ENCODE measurements at regions of chr3 and their contacts with region 1.

Region 1: GRCh38 chr3:98972155-98972554 is 70.7 kb upstream of the DCBLD2 start:
- DNase-seq: no peak
- H3K4me3 ChIP-seq: no peak overlapping the region
- H3K27ac ChIP-seq: peak overlapping the region; percentile 91
- H3K4me1 ChIP-seq: peaks cover 40% of the 10 kb centered on the region
- H3K27me3 ChIP-seq: no peaks in the 10 kb centered on the region
- CTCF ChIP-seq: no peak

Region 2: DNA sequence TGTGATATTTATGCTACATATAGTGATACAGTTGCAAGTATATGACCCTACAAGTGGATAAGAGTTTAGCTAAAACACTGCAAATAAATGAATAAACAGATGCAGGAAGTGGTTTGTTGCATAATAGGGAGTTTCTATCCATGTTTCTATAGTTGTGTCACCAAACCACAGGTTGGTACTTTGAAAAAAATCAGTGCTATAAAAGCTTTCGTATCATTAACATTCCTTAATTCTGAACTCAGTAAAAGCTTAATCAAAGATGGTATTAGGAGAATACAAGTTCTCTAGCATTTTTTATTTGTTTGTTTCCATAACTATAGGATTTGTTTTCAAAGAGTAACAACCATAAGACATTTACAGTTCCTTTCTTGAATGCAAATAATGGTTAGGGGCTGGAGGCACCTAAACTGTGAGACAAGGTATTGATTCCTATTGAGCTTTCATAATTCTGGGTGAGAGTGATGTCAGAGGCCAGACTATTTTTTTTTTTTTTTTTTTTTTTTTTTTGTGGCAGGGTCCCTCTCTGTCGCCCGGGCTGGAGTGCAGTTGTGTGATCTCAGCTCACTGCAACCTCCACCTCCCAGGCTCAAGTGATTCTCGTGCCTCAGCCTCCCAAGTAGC is 408.4 kb before region 1 on chr3:
- CTCF ChIA-PET with region 1: no interaction called
- POLR2A ChIA-PET with region 1: interaction called, 17 read pairs
- intact Hi-C with region 1: no loop called
- DNase-seq: peak in 1 of 2 experiments; percentile 88
- H3K4me3 ChIP-seq: 0 out of 2 replicates have a peak overlapping the region, but pooled peaks have one; percentile 8
- H3K27ac ChIP-seq: peak overlapping the region; percentile 40
- H3K4me1 ChIP-seq: peaks cover 37% of the 10 kb centered on the region
- H3K27me3 ChIP-seq: no peaks in the 10 kb centered on the region
- CTCF ChIP-seq: no peak

Region 3: GRCh38 chr3:98921957-98922356 is 50.2 kb before region 1 on chr3:
- CTCF ChIA-PET with region 1: no interaction called
- POLR2A ChIA-PET with region 1: no interaction called
- intact Hi-C with region 1: loop called (anchors 2 kb)
- DNase-seq: no peak
- H3K4me3 ChIP-seq: no peak overlapping the region
- H3K27ac ChIP-seq: peak overlapping the region; percentile 96
- H3K4me1 ChIP-seq: peaks cover 39% of the 10 kb centered on the region
- H3K27me3 ChIP-seq: no peaks in the 10 kb centered on the region
- CTCF ChIP-seq: no peak

Measured in PC-9 (cell line).